B cell (primary cell): ENCODE measurements at regions of chr18 and their contacts with region 1.

Region 1: DNA sequence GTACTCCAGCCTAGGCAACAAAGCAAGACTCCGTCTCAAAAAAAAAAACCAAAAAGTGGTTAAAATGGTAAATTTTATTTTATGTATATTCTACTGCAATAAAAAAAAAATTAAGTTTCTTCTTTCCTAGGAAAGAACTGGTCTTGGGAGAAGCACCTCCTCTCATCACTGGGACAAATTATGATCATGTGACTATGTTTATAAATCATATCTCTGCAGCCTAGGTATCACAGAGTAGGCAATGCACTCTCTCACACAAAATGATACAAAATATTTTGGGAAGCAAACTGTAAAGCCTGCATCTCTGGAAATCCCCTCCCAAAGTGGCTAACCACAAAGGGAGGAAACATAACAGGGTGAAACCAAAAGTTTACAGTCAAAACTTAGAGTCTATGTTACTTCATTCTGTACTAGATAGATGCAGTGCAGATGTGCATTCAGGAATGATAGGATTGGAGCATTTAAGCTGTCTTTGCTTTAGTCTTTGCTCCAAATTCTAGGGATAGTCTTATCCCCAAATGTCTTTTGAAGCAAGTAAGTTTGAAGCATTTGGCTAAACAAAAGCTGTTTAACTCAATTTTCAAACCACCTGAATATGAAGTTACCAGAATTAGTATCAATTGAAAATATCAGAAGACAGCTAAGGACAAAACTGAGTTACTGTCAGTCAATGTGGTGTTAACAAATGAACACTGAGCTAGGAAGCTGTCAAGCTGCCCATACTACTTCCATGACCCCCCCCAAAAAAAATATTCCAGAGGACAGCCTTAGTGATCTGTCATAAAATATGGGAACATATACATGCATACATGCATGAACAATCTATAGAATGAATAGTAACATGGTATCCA is 21.1 kb upstream of the MALT1 start:
- DNase-seq: peak; percentile 85
- ATAC-seq: peak; percentile 90
- H3K4me3 ChIP-seq: peak overlapping the region in 4 of 5 experiments; percentile 12 to 59 (median 19)
- H3K4me3 Mint-ChIP-seq: peak overlapping the region; percentile 61
- H3K27ac ChIP-seq: peak overlapping the region; percentile 48 to 69
- H3K27ac Mint-ChIP-seq: peak overlapping the region; percentile 90
- H3K4me1 ChIP-seq: peaks cover 49 to 72% of the 10 kb centered on the region in 2 donors
- H3K4me1 Mint-ChIP-seq: peaks cover 66% of the 10 kb centered on the region
- H3K27me3 ChIP-seq: no peaks in the 10 kb centered on the region
- H3K27me3 Mint-ChIP-seq: no peaks in the 10 kb centered on the region
- CTCF ChIP-seq: no peak

Region 2: DNA sequence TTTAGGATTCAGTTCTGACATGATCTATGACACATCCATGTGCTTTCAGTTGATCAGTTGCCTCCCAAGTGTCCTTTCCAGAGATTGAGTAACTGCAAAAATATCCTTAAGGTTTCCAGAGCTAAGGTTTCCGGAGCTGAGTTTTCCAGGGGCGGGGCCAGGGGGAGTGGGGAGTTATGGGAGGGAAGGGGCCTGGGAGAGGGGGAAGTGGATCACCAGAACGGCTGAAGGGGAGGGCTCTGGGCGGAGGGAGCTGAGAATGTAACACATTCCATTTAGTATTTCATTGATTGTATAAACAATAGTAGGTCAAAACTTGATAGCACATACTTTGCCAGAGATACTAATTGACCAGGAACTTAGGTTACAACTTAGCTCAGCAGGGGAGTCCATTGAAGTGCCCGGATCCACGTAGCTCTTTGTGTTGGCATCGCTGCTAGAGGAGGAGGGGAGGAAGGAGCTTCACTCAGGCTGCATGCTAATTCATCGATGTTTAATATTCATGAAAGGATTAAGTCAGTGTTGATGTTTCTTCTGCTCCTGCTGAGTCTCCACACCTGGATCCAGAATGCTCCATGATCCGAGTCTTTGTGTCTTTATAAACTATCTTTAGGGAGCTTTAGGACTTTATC is 311.1 kb before region 1 on chr18:
- CTCF ChIA-PET with region 1: no interaction called
- POLR2A ChIA-PET with region 1: no interaction called
- intact Hi-C with region 1: no loop called
- DNase-seq: no peak
- ATAC-seq: no peak
- H3K4me3 ChIP-seq: no peak overlapping the region
- H3K4me3 Mint-ChIP-seq: no peak overlapping the region
- H3K27ac ChIP-seq: no peak overlapping the region
- H3K27ac Mint-ChIP-seq: no peak overlapping the region
- H3K4me1 ChIP-seq: no peaks in the 10 kb centered on the region
- H3K4me1 Mint-ChIP-seq: no peaks in the 10 kb centered on the region
- H3K27me3 ChIP-seq: no peaks in the 10 kb centered on the region
- H3K27me3 Mint-ChIP-seq: no peaks in the 10 kb centered on the region
- CTCF ChIP-seq: no peak

Region 3: DNA sequence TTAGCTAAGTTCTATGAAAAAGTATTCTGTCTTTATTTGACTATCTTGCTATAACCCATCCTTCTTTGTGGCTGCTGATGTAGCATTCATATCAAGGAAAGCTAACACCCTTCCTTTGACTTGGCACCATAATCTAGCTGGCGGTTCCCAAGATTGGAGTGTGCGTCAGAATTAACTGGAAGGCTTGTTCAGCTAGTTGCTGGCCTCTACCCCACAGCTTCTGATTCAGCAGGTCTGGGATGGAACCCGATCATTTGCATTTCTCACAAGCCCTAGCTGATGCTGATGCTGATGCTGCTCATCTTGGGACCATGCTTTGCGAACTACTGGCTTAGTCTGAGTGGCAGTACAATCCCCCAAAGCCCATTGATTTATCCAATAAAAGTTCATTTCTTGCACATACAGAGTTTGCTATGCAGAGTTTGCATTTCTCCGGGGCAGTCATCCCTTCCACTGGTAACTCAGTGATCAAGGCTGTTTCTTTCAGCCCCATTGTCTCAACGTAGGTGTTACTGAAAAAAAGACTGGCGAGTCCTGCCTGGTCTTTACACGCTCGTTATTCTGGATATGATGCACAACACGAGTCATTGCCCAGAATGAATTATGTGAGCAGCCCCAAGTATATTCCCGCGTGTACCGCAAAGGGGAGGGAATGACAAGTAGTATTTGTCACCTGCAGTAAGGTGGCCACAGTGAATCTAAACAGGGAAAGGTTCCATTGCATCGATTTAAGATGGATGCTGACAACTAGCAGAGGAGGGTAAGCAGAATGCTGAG is 310.9 kb after region 1 on chr18:
- CTCF ChIA-PET with region 1: no interaction called
- POLR2A ChIA-PET with region 1: no interaction called
- intact Hi-C with region 1: loop called (anchors 10 kb)
- DNase-seq: no peak
- ATAC-seq: no peak
- H3K4me3 ChIP-seq: no peak overlapping the region
- H3K4me3 Mint-ChIP-seq: peak overlapping the region; percentile 35
- H3K27ac ChIP-seq: peak overlapping the region in 1 of 2 donors; percentile 16
- H3K27ac Mint-ChIP-seq: peak overlapping the region; percentile 77
- H3K4me1 ChIP-seq: peaks cover 32 to 33% of the 10 kb centered on the region in 2 donors
- H3K4me1 Mint-ChIP-seq: peaks cover 50% of the 10 kb centered on the region
- H3K27me3 ChIP-seq: no peaks in the 10 kb centered on the region
- H3K27me3 Mint-ChIP-seq: no peaks in the 10 kb centered on the region
- CTCF ChIP-seq: no peak